ENCODE measurements at regions of chr16 and their contacts with region 1.

Region 1: DNA sequence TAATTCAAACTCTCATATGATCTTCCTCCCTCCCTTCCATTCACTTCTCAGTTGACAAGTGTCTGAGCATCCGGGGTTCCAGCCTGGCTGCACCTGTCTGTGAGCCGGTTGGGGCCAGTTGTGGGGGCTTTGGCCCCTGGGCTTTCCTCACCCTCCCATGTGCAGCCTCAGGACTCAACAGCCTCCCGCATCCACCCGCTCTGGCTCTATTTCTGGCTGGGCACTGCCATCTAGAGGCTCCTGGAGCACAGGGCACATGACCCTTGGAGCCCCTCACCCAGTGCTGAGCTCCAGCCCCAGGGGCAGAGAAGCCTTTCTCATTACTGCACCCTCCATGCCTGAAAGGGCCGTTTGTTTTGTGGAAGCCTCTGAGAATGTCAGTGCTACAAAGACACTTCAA is 43.3 kb downstream of the HAPSTR1 start:
- DNase-seq: peak; percentile 21 to 63 (median 51)
- ATAC-seq: peak; percentile 78
- H3K4me3 ChIP-seq: no peak overlapping the region
- H3K4me3 Mint-ChIP-seq: no peak overlapping the region
- H3K27ac ChIP-seq: no peak overlapping the region
- H3K27ac Mint-ChIP-seq: peak overlapping the region in 1 of 9 donors; percentile 59
- H3K4me1 ChIP-seq: peaks cover 0 to 9% of the 10 kb centered on the region in 2 donors
- H3K4me1 Mint-ChIP-seq: peaks cover 10 to 24% (median 16%) of the 10 kb centered on the region in 7 donors
- H3K27me3 ChIP-seq: no peaks in the 10 kb centered on the region
- H3K27me3 Mint-ChIP-seq: peaks cover 0 to 10% (median 6%) of the 10 kb centered on the region in 5 donors

Region 2: GRCh38 chr16:8660841-8661301 is 473.9 kb before region 1 on chr16:
- CTCF ChIA-PET with region 1: no interaction called
- POLR2A ChIA-PET with region 1: no interaction called
- intact Hi-C with region 1: loop called in 1 of 2 experiments (anchors 1 kb)
- DNase-seq: peak in 8 of 9 donors; percentile 11 to 71 (median 28)
- ATAC-seq: peak; percentile 81
- H3K4me3 ChIP-seq: no peak overlapping the region
- H3K4me3 Mint-ChIP-seq: no peak overlapping the region
- H3K27ac ChIP-seq: no peak overlapping the region
- H3K27ac Mint-ChIP-seq: no peak overlapping the region
- H3K4me1 ChIP-seq: no peaks in the 10 kb centered on the region
- H3K4me1 Mint-ChIP-seq: peaks cover 0 to 3% (median 0%) of the 10 kb centered on the region in 7 donors
- H3K27me3 ChIP-seq: no peaks in the 10 kb centered on the region
- H3K27me3 Mint-ChIP-seq: no peaks in the 10 kb centered on the region

Region 3: DNA sequence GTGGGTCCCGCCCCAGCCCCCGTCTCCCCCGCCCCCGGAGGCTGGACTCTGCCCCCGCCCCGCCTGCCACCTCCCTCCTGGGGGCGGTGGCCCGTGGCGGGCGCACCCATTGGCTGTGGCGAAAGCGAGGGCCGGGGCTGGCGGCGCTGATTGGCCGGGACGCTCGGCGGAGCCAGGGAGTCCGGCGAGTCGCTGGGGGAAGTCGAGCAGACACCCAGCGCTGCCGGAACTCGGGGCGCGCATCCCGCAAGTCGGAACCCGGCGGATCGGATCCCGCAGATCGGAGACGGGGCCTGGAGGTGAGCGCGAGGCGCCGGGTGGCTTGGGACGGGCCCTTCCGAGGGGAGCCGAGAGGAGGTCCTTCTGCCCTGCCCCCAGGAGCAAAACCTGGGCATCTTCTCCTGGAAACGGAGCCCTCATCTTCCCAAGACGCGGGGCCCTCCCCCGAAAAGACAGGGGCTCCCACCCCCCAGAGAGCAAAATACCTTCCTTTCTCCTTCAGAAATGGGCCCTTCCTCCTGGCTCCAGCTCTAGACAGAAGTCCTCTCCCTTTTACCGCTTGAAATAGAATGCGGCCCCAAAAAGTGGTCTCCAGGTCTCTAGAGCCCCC is 460.2 kb before region 1 on chr16 and contains the start of gene ABAT:
- CTCF ChIA-PET with region 1: no interaction called
- POLR2A ChIA-PET with region 1: no interaction called
- intact Hi-C with region 1: loop called in 1 of 2 experiments (anchors 10 kb)
- DNase-seq: peak; percentile 83 to 92 (median 87)
- ATAC-seq: peak; percentile 99
- H3K4me3 ChIP-seq: peak within 1 kb of the TSS; percentile 57
- H3K4me3 Mint-ChIP-seq: peak within 1 kb of the TSS; percentile 78 to 93 (median 88)
- H3K27ac ChIP-seq: peak within 1 kb of the TSS; percentile 70
- H3K27ac Mint-ChIP-seq: peak within 1 kb of the TSS; percentile 58 to 91 (median 78)
- H3K4me1 ChIP-seq: peaks cover 9 to 18% of the 10 kb centered on the region in 2 donors
- H3K4me1 Mint-ChIP-seq: peaks cover 6 to 22% (median 19%) of the 10 kb centered on the region in 7 donors
- H3K27me3 ChIP-seq: no peaks in the 10 kb centered on the region
- H3K27me3 Mint-ChIP-seq: peaks cover 0 to 7% (median 0%) of the 10 kb centered on the region in 5 donors
- total RNA-seq, gene ABAT: 5.4 to 11.5 (median 9.3) TPM

Region 4: GRCh38 chr16:8905168-8905762 is 229.5 kb before region 1 on chr16:
- CTCF ChIA-PET with region 1: no interaction called
- POLR2A ChIA-PET with region 1: no interaction called
- intact Hi-C with region 1: loop called (anchors 1 to 2 kb)
- DNase-seq: peak in 4 of 9 donors; percentile 18 to 39 (median 30)
- ATAC-seq: peak; percentile 63
- H3K4me3 ChIP-seq: no peak overlapping the region
- H3K4me3 Mint-ChIP-seq: no peak overlapping the region
- H3K27ac ChIP-seq: no peak overlapping the region
- H3K27ac Mint-ChIP-seq: peak overlapping the region in 3 of 9 donors; percentile 29 to 59 (median 42)
- H3K4me1 ChIP-seq: peaks cover 0 to 7% of the 10 kb centered on the region in 2 donors
- H3K4me1 Mint-ChIP-seq: peaks cover 6 to 29% (median 16%) of the 10 kb centered on the region in 7 donors
- H3K27me3 ChIP-seq: no peaks in the 10 kb centered on the region
- H3K27me3 Mint-ChIP-seq: no peaks in the 10 kb centered on the region

Region 5: GRCh38 chr16:8936421-8936820 is 198.3 kb before region 1 on chr16:
- CTCF ChIA-PET with region 1: interaction called, 3 read pairs
- POLR2A ChIA-PET with region 1: no interaction called
- intact Hi-C with region 1: loop called in 1 of 2 experiments (anchors 1 kb)
- DNase-seq: peak; percentile 29 to 75 (median 60)
- ATAC-seq: peak; percentile 94
- H3K4me3 ChIP-seq: no peak overlapping the region
- H3K4me3 Mint-ChIP-seq: peak overlapping the region in 8 of 10 donors; percentile 3 to 60 (median 38)
- H3K27ac ChIP-seq: no peak overlapping the region
- H3K27ac Mint-ChIP-seq: peak overlapping the region in 6 of 9 donors; percentile 21 to 87 (median 63)
- H3K4me1 ChIP-seq: peaks cover 35 to 43% of the 10 kb centered on the region in 2 donors
- H3K4me1 Mint-ChIP-seq: peaks cover 54 to 98% (median 93%) of the 10 kb centered on the region in 7 donors
- H3K27me3 ChIP-seq: no peaks in the 10 kb centered on the region
- H3K27me3 Mint-ChIP-seq: no peaks in the 10 kb centered on the region

Region 6: GRCh38 chr16:9008601-9009260 is 126.0 kb before region 1 on chr16:
- CTCF ChIA-PET with region 1: interaction called, 9 read pairs
- POLR2A ChIA-PET with region 1: no interaction called
- intact Hi-C with region 1: loop called in 1 of 2 experiments (anchors 1 kb)
- DNase-seq: peak; percentile 30 to 66 (median 57)
- ATAC-seq: peak; percentile 93
- H3K4me3 ChIP-seq: no peak overlapping the region
- H3K4me3 Mint-ChIP-seq: peak overlapping the region in 4 of 10 donors; percentile 49 to 67 (median 58)
- H3K27ac ChIP-seq: no peak overlapping the region
- H3K27ac Mint-ChIP-seq: no peak overlapping the region
- H3K4me1 ChIP-seq: peaks cover 0 to 6% of the 10 kb centered on the region in 2 donors
- H3K4me1 Mint-ChIP-seq: peaks cover 0 to 4% (median 3%) of the 10 kb centered on the region in 7 donors
- H3K27me3 ChIP-seq: no peaks in the 10 kb centered on the region
- H3K27me3 Mint-ChIP-seq: peaks cover 4 to 19% (median 8%) of the 10 kb centered on the region in 5 donors

Region 7: DNA sequence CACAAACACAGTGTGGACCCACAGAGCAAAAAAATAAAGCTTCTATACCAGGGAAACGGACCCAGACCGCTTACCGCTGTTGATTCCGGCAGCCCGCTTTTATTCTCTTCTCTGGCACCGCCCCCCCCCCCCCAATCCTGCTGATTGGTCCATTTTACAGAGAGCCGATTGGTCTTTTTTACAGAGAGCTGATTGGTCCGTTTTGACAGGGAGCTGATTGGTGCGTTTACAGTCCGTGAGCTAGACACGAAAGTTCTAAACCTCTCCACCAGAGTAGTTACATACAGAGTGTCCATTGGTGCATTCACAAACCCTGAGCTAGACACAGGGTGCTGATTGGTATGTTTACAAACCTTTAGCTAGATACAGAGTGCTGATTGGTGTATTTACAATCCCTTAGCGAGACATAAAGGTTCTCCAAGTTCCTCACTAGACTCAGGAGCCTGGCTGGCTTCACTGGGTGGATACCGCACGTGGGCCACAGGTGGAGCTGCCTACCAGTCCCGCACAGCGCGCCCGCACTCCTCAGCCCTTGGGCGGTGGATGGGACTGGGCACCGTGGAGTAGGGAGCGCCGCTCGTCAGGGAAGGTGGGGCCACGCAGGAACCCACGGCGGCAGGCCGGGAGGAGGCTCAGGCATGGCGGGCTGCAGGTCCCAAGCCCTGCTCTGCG is 49.1 kb after region 1 on chr16:
- CTCF ChIA-PET with region 1: no interaction called
- POLR2A ChIA-PET with region 1: no interaction called
- intact Hi-C with region 1: no loop called
- DNase-seq: no peak
- ATAC-seq: no peak
- H3K4me3 ChIP-seq: no peak overlapping the region
- H3K4me3 Mint-ChIP-seq: no peak overlapping the region
- H3K27ac ChIP-seq: no peak overlapping the region
- H3K27ac Mint-ChIP-seq: no peak overlapping the region
- H3K4me1 ChIP-seq: no peaks in the 10 kb centered on the region
- H3K4me1 Mint-ChIP-seq: no peaks in the 10 kb centered on the region
- H3K27me3 ChIP-seq: no peaks in the 10 kb centered on the region
- H3K27me3 Mint-ChIP-seq: peaks cover 0 to 28% (median 14%) of the 10 kb centered on the region in 5 donors